ENCODE measurements at regions of chr17 and their contacts with region 1.

Region 1: DNA sequence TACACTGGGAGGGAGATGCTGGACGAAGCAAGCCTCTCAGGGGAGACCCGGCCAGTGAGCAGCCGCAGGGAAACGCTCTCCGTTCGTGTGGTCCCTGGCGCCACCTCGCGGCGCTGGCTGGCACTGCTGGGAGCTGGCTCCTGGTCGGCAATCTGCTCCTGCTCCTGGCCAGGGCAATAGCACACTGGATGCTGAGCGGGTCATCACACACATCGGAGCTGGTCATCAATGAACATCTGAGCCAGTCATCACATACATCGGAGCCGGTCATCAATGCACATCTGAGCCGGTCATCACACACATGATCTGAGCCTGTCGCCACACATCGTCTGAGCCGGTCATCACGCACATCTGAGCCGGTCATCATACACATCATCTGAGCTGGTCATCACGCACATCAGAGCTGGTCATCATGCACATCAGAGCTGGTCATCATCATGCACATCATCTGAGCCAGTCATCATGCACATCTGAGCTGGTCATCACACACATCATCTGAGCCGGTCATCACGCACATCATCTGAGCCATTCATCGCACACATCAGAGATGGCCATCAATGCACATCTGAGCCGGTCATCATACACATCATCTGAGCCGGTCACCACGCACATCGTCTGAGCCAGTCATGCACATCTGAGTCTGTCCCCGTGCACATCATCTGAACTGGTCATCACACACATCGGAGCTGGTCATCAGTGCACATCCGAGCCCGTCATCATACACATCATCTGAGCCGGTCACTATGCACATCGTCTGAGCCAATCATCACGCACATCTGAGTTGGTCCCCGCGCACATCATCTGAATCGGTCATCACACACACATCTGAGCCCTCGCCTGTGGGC is 217.3 kb downstream of the RBFOX3 start:
- DNase-seq: peak; percentile 78
- H3K4me3 Mint-ChIP-seq: peak overlapping the region; percentile 5
- H3K27ac Mint-ChIP-seq: no peak overlapping the region
- H3K4me1 Mint-ChIP-seq: peaks cover 4% of the 10 kb centered on the region
- H3K27me3 Mint-ChIP-seq: peaks cover 53% of the 10 kb centered on the region

Region 2: DNA sequence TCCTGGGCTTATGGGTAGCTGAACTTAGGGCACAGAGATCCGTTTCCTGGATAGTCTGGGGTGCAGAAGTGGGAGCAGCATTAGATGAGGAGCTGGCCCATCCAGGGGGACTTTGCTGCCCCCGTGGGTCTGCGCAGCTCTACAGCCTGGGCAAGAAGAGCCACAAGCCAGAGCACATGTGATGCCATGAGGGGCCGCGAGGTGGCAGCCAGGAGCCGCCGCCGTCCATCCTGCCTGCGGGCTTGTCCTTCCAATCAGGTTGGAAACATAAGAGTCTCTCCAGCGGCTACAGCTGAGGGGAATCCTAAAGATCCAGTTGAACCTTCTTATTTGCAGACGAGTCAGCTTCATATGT is 347.8 kb before region 1 on chr17:
- CTCF ChIA-PET with region 1: interaction called, 19 read pairs
- POLR2A ChIA-PET with region 1: no interaction called
- intact Hi-C with region 1: loop called (anchors 2 kb)
- DNase-seq: peak; percentile 75
- H3K4me3 Mint-ChIP-seq: no peak overlapping the region
- H3K27ac Mint-ChIP-seq: no peak overlapping the region
- H3K4me1 Mint-ChIP-seq: no peaks in the 10 kb centered on the region
- H3K27me3 Mint-ChIP-seq: peaks cover 15% of the 10 kb centered on the region

Region 3: GRCh38 chr17:79087428-79088143 is 306.0 kb before region 1 on chr17:
- CTCF ChIA-PET with region 1: interaction called, 67 read pairs
- POLR2A ChIA-PET with region 1: no interaction called
- intact Hi-C with region 1: loop called (anchors 1 kb)
- DNase-seq: peak; percentile 82
- H3K4me3 Mint-ChIP-seq: no peak overlapping the region
- H3K27ac Mint-ChIP-seq: no peak overlapping the region
- H3K4me1 Mint-ChIP-seq: no peaks in the 10 kb centered on the region
- H3K27me3 Mint-ChIP-seq: peaks cover 2% of the 10 kb centered on the region

Region 4: GRCh38 chr17:79126139-79126538 is 267.4 kb before region 1 on chr17:
- CTCF ChIA-PET with region 1: no interaction called
- POLR2A ChIA-PET with region 1: no interaction called
- intact Hi-C with region 1: no loop called
- DNase-seq: no peak
- H3K4me3 Mint-ChIP-seq: no peak overlapping the region
- H3K27ac Mint-ChIP-seq: no peak overlapping the region
- H3K4me1 Mint-ChIP-seq: no peaks in the 10 kb centered on the region
- H3K27me3 Mint-ChIP-seq: peaks cover 3% of the 10 kb centered on the region